Activated B cell treated with CpG ODN at 0.5 μM for 24 hours (primary cell): ENCODE measurements at regions of chr10 and their contacts with region 1.

Region 1: DNA sequence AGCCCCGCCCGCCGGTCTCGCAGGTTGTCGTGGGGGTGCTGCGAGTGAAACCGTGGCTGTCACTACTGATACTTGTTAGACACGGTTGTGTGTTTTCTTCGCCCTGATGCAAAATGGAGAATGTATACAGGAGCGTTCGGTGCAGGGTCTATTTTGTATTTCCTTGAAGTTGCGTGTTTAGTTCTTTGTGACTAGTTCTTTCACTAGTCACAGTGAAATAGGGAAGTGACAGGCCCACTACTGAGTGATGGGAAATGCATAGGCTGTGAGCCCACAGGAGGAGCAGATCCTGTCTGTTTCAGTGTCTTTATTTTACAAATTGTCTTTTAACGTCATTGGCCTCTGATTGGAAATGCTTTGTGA is 675 bp downstream of the ABRAXAS2 start:
- DNase-seq: no peak
- ATAC-seq: peak; percentile 61
- H3K4me3 Mint-ChIP-seq: peak overlapping the region; percentile 92
- H3K27ac Mint-ChIP-seq: peak overlapping the region; percentile 93
- H3K4me1 Mint-ChIP-seq: peaks cover 18% of the 10 kb centered on the region
- H3K27me3 Mint-ChIP-seq: peaks cover 2% of the 10 kb centered on the region
- CTCF ChIP-seq: no peak

Region 2: DNA sequence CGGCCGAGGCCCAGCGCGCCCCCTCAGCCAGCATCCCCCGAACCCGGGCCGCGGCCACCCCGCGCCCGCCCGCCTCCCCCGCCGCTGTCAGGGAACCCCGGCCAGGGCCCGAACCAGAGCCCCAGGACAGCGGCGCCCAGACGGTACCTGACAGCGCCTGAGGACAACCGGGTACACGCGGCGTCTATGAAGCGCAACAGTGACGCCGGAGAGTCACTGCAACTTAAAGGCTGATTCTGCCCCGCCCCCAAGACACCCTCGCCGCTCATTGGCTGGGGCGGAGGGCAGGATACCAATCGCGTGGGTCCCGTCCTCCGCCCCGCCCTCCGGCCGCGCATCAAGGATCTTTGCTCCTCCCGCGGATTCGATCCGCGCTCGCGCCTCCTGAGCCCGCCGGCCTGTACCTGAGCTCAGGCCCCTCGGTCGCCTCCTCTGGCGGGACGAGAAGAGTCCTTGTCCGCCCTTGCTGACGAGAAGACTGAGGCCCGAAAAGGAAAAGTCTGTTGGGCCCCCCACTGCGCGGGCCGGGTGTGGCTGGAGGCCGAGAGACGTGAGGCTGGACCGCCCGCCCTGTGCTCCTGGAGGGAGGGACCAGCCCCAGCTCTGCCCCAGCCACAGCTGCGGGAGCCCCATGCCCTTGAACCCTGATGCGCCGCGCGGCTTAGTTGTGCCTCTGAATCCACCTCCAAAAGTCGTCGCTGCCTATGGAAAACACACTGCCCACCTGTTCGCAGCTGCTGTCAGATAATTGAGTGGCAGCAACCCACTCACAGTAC is 383.4 kb before region 1 on chr10 and contains the start of gene OAT:
- CTCF ChIA-PET with region 1: no interaction called
- POLR2A ChIA-PET with region 1: no interaction called
- intact Hi-C with region 1: loop called (anchors 5 kb)
- DNase-seq: peak; percentile 92
- ATAC-seq: peak; percentile 97
- H3K4me3 Mint-ChIP-seq: peak within 1 kb of the TSS; percentile 82
- H3K27ac Mint-ChIP-seq: peak within 1 kb of the TSS; percentile 46
- H3K4me1 Mint-ChIP-seq: peaks cover 12% of the 10 kb centered on the region
- H3K27me3 Mint-ChIP-seq: peaks cover 19% of the 10 kb centered on the region
- CTCF ChIP-seq: no peak
- total RNA-seq, gene OAT: 19.6 and 20.1 TPM in 2 replicates

Region 3: DNA sequence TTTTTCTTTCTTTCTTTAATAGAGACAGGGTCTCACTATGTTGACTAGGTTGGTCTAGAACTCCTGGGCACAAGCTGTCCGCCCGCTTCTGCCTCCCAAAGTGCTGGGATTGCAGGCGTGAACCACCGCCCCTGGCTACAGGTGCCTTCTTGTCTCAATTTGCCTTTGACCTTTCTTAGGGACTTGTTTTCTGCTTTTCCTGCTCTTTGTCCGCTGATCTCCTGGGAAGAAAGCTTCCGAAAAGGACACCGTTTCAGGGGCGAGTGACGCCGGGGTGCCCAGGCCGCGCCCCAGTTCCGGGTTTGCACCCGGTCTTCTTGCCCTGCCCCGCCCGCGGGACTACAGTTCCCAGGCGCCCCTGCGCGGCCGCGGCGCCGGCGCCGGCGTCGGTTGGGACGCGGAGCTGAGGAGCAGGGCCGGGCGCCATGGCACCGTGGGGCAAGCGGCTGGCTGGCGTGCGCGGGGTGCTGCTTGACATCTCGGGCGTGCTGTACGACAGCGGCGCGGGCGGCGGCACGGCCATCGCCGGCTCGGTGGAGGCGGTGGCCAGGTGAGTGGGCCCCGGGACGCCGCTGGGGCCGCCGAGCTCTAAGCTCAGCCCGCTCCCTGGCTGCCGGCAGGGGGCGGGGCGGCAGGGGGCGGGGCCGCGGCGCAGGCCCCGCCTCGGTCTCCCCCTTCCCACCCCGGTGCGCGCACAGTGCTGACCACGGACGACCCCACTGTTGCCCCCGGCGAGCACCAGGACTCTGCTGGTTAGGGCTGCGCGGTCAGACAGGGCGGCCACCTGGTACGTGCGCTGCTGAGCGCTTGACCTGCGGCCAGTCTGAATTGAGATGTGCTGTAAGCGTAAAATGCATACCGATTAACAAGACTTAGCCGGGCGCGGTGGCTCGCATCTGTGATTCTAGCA is 340.6 kb before region 1 on chr10 and contains the start of gene LHPP:
- CTCF ChIA-PET with region 1: no interaction called
- POLR2A ChIA-PET with region 1: interaction called, 3 read pairs
- intact Hi-C with region 1: loop called (anchors 1 kb)
- DNase-seq: peak; percentile 91
- ATAC-seq: peak; percentile 92
- H3K4me3 Mint-ChIP-seq: peak within 1 kb of the TSS; percentile 92
- H3K27ac Mint-ChIP-seq: peak within 1 kb of the TSS; percentile 95
- H3K4me1 Mint-ChIP-seq: peaks cover 32% of the 10 kb centered on the region
- H3K27me3 Mint-ChIP-seq: peaks cover 4% of the 10 kb centered on the region
- CTCF ChIP-seq: no peak
- total RNA-seq, gene LHPP: 21.0 and 22.9 TPM in 2 replicates

Region 4: DNA sequence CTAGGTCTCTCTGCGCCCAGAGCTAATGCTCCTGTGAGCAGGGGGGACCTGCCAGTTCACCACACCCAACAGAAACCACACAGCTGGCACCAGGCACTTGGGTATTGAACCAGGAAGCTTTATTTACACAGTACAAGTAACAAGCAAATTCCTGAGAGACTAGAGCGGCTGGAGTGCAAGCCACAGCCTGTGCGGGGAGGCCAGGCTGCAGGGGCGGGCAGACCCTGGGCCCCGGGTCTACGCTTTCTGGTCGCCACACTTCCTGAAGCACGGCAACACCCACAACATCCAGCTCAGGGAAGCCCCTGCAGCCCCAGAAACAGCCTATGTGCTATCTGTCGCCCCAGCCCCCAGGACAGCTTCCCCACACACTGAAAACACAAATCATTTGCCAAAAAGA is 183.1 kb before region 1 on chr10:
- CTCF ChIA-PET with region 1: no interaction called
- POLR2A ChIA-PET with region 1: interaction called, 13 read pairs
- intact Hi-C with region 1: no loop called
- DNase-seq: no peak
- ATAC-seq: peak; percentile 72
- H3K4me3 Mint-ChIP-seq: peak overlapping the region; percentile 69
- H3K27ac Mint-ChIP-seq: peak overlapping the region; percentile 96
- H3K4me1 Mint-ChIP-seq: peaks cover 99% of the 10 kb centered on the region
- H3K27me3 Mint-ChIP-seq: no peaks in the 10 kb centered on the region
- CTCF ChIP-seq: no peak

Region 5: GRCh38 chr10:124665980-124666379 is 136.3 kb before region 1 on chr10:
- CTCF ChIA-PET with region 1: no interaction called
- POLR2A ChIA-PET with region 1: no interaction called
- intact Hi-C with region 1: no loop called
- DNase-seq: no peak
- ATAC-seq: no peak
- H3K4me3 Mint-ChIP-seq: no peak overlapping the region
- H3K27ac Mint-ChIP-seq: no peak overlapping the region
- H3K4me1 Mint-ChIP-seq: peaks cover 42% of the 10 kb centered on the region
- H3K27me3 Mint-ChIP-seq: no peaks in the 10 kb centered on the region
- CTCF ChIP-seq: no peak

Region 6: GRCh38 chr10:124791378-124792348 is 10.6 kb before region 1 on chr10 and contains the start of gene EEF1AKMT2:
- CTCF ChIA-PET with region 1: interaction called, 3 read pairs
- POLR2A ChIA-PET with region 1: interaction called, 51 read pairs
- intact Hi-C with region 1: loop called (anchors 1 kb)
- DNase-seq: peak; percentile 85
- ATAC-seq: peak; percentile 95
- H3K4me3 Mint-ChIP-seq: peak within 1 kb of the TSS; percentile 96
- H3K27ac Mint-ChIP-seq: peak within 1 kb of the TSS; percentile 91
- H3K4me1 Mint-ChIP-seq: peaks cover 25% of the 10 kb centered on the region
- H3K27me3 Mint-ChIP-seq: no peaks in the 10 kb centered on the region
- CTCF ChIP-seq: no peak
- total RNA-seq, gene EEF1AKMT2: 16.5 and 17.0 TPM in 2 replicates

Region 7: DNA sequence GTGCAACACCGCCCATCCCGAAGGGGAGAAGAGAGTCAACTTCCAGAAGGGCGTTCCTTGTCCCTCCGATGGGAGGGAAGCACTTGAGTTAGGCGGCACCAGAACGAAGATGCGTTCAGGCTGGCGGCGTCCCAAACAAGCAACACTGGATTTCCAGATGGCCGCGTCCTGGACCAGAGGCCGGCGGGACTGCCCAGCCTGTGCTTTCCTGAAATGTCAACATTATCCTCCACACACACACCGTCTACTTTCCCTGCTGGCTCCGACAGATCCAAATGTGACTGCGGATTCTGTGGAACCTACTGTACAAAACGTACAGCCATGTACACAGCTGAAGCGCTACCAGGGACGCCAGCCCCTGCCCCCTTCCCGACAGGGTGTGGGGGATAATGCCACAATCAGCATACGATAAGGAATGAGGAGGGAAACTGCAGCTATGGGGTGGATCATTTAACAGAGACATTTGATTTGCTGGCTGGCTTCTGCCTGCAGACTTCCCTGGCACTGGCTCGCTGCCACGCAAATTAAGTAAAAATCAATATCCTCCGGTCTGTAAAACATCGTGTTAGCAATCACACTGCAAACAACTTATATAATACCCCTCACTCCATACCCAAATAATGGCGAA is 221.7 kb after region 1 on chr10:
- CTCF ChIA-PET with region 1: no interaction called
- POLR2A ChIA-PET with region 1: no interaction called
- intact Hi-C with region 1: no loop called
- DNase-seq: no peak
- ATAC-seq: no peak
- H3K4me3 Mint-ChIP-seq: no peak overlapping the region
- H3K27ac Mint-ChIP-seq: no peak overlapping the region
- H3K4me1 Mint-ChIP-seq: peaks cover 14% of the 10 kb centered on the region
- H3K27me3 Mint-ChIP-seq: peaks cover 21% of the 10 kb centered on the region
- CTCF ChIP-seq: no peak